CD4-positive, alpha-beta memory T cell (primary cell): ENCODE measurements at regions of chr1 and their contacts with region 1.

Region 1: GRCh38 chr1:145978854-145979759 is 14.6 kb downstream of the POLR3GL start:
- DNase-seq: peak; percentile 78 to 94 (median 81)
- H3K4me3 ChIP-seq: peak overlapping the region; percentile 52 to 62
- H3K4me3 Mint-ChIP-seq: no peak overlapping the region
- H3K27ac ChIP-seq: peak overlapping the region; percentile 70
- H3K27ac Mint-ChIP-seq: no peak overlapping the region
- H3K4me1 ChIP-seq: peaks cover 77% of the 10 kb centered on the region
- H3K4me1 Mint-ChIP-seq: peaks cover 13 to 31% (median 21%) of the 10 kb centered on the region in 4 donors
- H3K27me3 ChIP-seq: no peaks in the 10 kb centered on the region
- H3K27me3 Mint-ChIP-seq: no peaks in the 10 kb centered on the region

Region 2: DNA sequence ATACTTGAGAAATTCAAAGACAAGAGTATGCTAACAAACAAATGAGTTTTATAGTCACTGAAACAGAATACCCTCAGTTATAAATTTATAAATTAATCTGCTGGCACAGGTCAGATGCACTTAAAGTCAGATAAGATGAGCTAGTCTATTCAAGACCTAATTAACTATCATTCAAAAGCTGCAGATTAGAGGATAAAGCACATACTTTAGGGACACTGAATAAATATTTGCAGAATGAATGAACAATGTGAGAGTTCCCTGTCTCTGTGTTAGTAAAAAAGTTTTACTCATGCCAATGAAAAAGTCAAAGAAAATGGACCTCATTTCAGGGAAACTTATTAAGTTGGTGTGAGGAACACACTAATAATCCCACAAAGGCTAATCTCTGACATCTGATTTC is 213.5 kb before region 1 on chr1:
- CTCF ChIA-PET with region 1: no interaction called
- POLR2A ChIA-PET with region 1: no interaction called
- intact Hi-C with region 1: no loop called
- DNase-seq: no peak
- H3K4me3 ChIP-seq: no peak overlapping the region
- H3K4me3 Mint-ChIP-seq: no peak overlapping the region
- H3K27ac ChIP-seq: no peak overlapping the region
- H3K27ac Mint-ChIP-seq: no peak overlapping the region
- H3K4me1 ChIP-seq: no peaks in the 10 kb centered on the region
- H3K4me1 Mint-ChIP-seq: peaks cover 0 to 3% (median 0%) of the 10 kb centered on the region in 4 donors
- H3K27me3 ChIP-seq: no peaks in the 10 kb centered on the region
- H3K27me3 Mint-ChIP-seq: no peaks in the 10 kb centered on the region

Region 3: DNA sequence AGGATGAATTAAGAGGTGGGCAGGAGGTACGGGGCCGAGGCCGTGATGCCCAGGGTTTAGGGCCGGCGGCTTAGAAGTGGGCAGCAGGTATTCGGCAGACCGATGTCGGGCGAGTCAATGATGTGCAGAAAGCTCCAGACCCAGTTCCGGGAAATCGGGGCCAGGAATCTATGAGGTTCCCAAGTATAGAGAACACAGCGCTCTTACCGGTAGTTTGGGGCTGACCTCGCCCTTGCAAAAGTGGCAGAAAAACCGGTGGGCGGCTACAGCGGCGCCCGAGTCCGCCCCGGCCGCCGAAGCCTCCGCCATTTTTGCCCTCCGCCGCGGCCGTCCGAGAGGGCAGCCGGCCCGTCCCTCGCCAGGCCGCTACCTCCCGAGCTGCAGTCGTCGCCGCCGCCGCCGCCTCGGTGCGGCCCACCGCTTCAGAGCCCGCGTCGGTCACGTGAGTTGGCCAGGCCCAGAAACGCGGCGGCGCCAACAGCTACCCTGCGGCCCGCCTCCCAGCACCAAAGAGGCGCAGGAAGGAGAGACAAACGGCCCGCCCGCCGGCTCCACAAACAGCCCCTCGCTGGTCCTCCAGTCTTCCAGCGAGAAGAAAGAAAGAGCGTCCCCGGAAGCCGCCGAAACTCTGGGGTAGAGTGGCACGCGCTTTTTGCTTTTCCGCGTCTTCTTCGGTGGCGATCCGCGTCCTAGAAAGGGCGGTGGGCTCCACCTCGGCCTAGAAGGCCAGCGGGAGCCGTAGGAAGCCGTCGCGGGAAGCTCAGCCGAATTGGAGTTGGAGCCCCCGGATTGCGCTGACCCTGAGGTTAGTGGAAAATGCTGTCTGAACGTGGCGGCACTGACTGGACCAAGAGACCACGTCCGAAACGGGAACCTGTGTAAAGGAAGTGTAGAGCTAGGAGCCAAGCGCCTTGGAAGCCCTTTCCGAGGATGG is 155.3 kb before region 1 on chr1 and contains the starts of genes POLR3C and RNF115:
- CTCF ChIA-PET with region 1: no interaction called
- POLR2A ChIA-PET with region 1: interaction called, 14 read pairs
- intact Hi-C with region 1: no loop called
- DNase-seq: peak; percentile 84 to 92 (median 86)
- H3K4me3 ChIP-seq: peak within 1 kb of the TSS; percentile 93 to 100
- H3K4me3 Mint-ChIP-seq: peak within 1 kb of the TSS; percentile 97 to 99 (median 98)
- H3K27ac ChIP-seq: peak within 1 kb of the TSS; percentile 78
- H3K27ac Mint-ChIP-seq: peak within 1 kb of the TSS; percentile 90 to 99 (median 97)
- H3K4me1 ChIP-seq: peaks cover 23% of the 10 kb centered on the region
- H3K4me1 Mint-ChIP-seq: peaks cover 17 to 35% (median 24%) of the 10 kb centered on the region in 4 donors
- H3K27me3 ChIP-seq: no peaks in the 10 kb centered on the region
- H3K27me3 Mint-ChIP-seq: no peaks in the 10 kb centered on the region
- total RNA-seq, gene POLR3C: 43.5 to 44.8 TPM
- total RNA-seq, gene RNF115: 15.2 to 15.3 TPM

Region 4: DNA sequence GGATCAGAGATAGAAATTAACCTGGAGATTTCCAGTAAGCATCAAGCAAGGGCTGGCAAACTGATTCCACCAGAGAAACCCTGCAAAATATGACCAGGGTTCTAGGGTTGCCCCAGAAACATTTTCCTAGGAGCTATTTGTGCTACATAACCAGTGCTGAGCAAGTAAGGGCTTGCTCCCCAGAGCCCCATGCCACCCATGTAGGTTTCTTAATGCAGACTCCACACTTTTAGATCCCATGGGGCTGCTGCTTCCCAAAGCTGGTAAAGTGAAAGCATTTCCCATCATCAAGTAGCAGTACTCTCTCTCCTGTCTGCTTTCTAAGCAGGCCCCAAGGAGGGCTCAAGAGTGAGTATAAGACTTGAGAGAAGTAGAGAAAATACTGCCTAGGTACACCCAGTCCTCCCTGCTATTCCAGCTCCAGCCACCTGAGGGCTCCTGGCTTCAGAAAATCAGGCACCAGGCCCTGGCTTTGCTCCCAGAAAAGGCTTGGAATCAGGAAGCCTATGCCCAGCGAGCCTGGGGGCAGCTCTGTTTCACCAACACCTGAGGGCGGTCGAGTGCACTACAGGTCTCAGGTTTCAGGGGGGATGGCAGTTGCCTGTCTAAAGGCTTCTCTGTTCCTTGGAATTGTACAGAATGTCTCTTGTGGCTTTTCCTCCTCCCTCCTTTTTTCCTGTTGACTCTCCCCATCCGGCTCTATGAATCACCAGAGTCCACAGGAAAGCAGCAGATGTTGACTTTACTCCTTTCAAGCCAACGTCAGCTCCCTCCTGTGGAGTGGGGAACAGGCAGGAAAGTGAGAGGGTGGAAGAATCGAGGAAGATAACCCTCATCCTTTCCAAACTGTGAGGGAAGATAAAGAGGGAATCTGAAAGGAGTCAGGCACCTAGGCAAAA is 87.3 kb before region 1 on chr1:
- CTCF ChIA-PET with region 1: interaction called, 13 read pairs
- POLR2A ChIA-PET with region 1: interaction called, 4 read pairs
- intact Hi-C with region 1: no loop called
- DNase-seq: peak; percentile 21 to 50 (median 38)
- H3K4me3 ChIP-seq: no peak overlapping the region
- H3K4me3 Mint-ChIP-seq: no peak overlapping the region
- H3K27ac ChIP-seq: no peak overlapping the region
- H3K27ac Mint-ChIP-seq: no peak overlapping the region
- H3K4me1 ChIP-seq: no peaks in the 10 kb centered on the region
- H3K4me1 Mint-ChIP-seq: peaks cover 0 to 2% (median under 1%) of the 10 kb centered on the region in 4 donors
- H3K27me3 ChIP-seq: no peaks in the 10 kb centered on the region
- H3K27me3 Mint-ChIP-seq: peaks cover 0 to under 1% of the 10 kb centered on the region in 2 donors

Region 5: DNA sequence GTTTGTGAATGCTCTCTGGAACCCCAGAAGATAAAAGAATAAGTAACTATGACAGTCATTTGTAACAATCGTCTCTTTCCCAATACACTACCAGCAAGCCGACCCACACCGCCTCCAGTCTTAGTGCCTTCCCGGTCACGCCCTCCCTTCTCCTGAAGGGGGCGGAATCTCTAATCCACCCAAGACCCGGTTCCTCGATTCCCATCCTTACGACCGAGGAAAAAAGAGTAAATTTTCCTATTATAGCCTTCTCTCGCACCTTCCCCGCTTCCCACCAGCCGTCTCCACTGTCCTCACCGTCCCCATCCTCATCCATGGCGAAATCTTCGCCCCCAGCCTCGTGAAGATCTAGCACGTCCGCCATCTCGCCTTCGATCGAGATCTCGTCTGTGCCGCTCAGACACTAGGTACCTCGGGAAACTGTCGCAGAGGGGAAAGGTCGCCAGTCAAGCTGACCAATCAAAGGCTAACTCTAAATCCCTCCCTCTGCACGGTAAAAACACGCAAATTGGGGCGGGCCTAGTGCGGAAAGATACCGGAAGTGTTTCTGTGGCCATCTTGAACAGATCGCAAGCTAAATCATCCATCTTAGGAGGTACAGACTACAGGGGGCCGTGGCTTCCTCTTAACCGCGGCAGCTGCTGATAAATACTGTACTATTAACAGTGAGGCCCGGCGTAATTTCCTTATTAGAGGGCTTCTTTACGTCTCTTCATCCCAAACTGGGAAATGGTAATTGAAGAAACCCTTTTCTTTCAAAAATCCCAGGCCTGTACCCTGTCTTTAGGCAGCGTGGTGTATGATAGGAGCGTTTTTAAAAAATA is 51.8 kb before region 1 on chr1 and contains the start of gene RBM8A:
- CTCF ChIA-PET with region 1: interaction called, 29 read pairs
- POLR2A ChIA-PET with region 1: interaction called, 54 read pairs
- intact Hi-C with region 1: no loop called
- DNase-seq: peak; percentile 94 to 98 (median 97)
- H3K4me3 ChIP-seq: peak within 1 kb of the TSS; percentile 96 to 99
- H3K4me3 Mint-ChIP-seq: peak within 1 kb of the TSS in 5 of 8 donors; percentile 20 to 69 (median 42)
- H3K27ac ChIP-seq: peak within 1 kb of the TSS; percentile 96
- H3K27ac Mint-ChIP-seq: peak within 1 kb of the TSS in 4 of 7 donors; percentile 72 to 94 (median 82)
- H3K4me1 ChIP-seq: peaks cover 29% of the 10 kb centered on the region
- H3K4me1 Mint-ChIP-seq: peaks cover 10 to 25% (median 17%) of the 10 kb centered on the region in 4 donors
- H3K27me3 ChIP-seq: no peaks in the 10 kb centered on the region
- H3K27me3 Mint-ChIP-seq: no peaks in the 10 kb centered on the region
- total RNA-seq, gene RBM8A: 116 to 122 TPM

Region 6: DNA sequence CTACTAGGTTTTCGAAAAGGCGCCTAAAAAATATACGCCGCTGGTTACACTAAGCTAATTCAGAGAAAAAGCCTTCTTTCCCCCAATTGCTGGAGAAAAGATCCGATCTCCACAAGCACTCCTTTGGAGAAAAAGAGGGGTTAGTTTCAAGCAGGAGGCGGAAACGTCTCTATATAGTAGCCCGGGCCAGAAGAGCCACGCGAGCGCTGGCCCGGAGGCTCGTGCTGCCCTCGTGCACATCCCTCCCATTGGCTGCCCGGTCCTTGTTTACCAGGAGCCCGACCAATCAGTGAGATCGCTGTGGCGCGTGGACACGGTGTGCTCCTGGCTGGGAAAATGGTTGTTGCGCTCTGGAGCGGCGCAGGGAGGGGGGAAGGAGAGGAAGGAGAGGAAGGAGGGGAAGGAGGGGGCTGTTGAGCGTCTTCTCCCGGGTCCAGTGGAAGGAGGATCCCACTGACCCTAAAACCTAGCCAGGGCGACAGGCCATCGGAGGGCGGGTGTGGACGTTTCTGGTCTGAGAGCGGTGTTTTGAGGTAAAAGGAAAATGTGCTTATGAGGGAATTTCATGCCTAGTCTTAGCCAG is 17.4 kb after region 1 on chr1 and contains the start of gene TXNIP:
- CTCF ChIA-PET with region 1: interaction called, 447 read pairs
- POLR2A ChIA-PET with region 1: interaction called, 1,967 read pairs
- intact Hi-C with region 1: loop called (anchors 1 kb)
- DNase-seq: peak; percentile 90 to 96 (median 94)
- H3K4me3 ChIP-seq: peak within 1 kb of the TSS; percentile 97 to 99
- H3K4me3 Mint-ChIP-seq: peak within 1 kb of the TSS; percentile 96 to 99 (median 98)
- H3K27ac ChIP-seq: peak within 1 kb of the TSS; percentile 75
- H3K27ac Mint-ChIP-seq: peak within 1 kb of the TSS; percentile 96 to 99 (median 97)
- H3K4me1 ChIP-seq: peaks cover 62% of the 10 kb centered on the region
- H3K4me1 Mint-ChIP-seq: peaks cover 39 to 89% (median 50%) of the 10 kb centered on the region in 4 donors
- H3K27me3 ChIP-seq: no peaks in the 10 kb centered on the region
- H3K27me3 Mint-ChIP-seq: no peaks in the 10 kb centered on the region
- total RNA-seq, gene TXNIP: 933 to 985 TPM

Region 7: GRCh38 chr1:146019231-146020057 is 40.3 kb after region 1 on chr1:
- CTCF ChIA-PET with region 1: interaction called, 25 read pairs
- POLR2A ChIA-PET with region 1: interaction called, 1,967 read pairs
- intact Hi-C with region 1: no loop called
- DNase-seq: no peak
- H3K4me3 ChIP-seq: no peak overlapping the region
- H3K4me3 Mint-ChIP-seq: peak overlapping the region in 5 of 8 donors; percentile 22 to 72 (median 51)
- H3K27ac ChIP-seq: no peak overlapping the region
- H3K27ac Mint-ChIP-seq: no peak overlapping the region
- H3K4me1 ChIP-seq: peaks cover 12% of the 10 kb centered on the region
- H3K4me1 Mint-ChIP-seq: peaks cover 8 to 10% (median 9%) of the 10 kb centered on the region in 4 donors
- H3K27me3 ChIP-seq: peaks cover 34% of the 10 kb centered on the region
- H3K27me3 Mint-ChIP-seq: peaks cover 35 to 40% of the 10 kb centered on the region in 2 donors

Region 8: DNA sequence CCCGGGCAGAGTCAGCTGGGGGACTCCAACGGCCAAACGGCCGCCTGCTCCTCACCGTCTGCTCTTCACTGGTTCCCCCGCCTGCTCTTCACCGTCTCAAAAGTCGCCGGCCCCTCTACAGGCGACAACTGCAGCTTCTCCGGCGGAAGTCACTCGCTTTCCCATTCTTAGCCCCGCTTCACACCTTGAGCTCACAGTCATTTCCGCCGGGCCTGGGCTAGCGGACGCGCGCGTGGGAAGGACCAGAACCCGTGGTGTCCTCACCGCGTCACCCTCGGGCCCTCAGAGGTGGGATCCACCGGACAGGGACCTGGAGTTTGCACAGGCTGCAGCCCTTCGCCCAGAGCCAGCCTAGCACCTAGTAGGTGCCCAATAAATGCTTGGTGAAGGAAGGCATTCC is 70.3 kb after region 1 on chr1:
- CTCF ChIA-PET with region 1: no interaction called
- POLR2A ChIA-PET with region 1: no interaction called
- intact Hi-C with region 1: no loop called
- DNase-seq: peak in 1 of 5 donors; percentile 35
- H3K4me3 ChIP-seq: no peak overlapping the region
- H3K4me3 Mint-ChIP-seq: peak overlapping the region in 2 of 8 donors; percentile 0 to 38
- H3K27ac ChIP-seq: no peak overlapping the region
- H3K27ac Mint-ChIP-seq: peak overlapping the region in 3 of 7 donors; percentile 2 to 62 (median 40)
- H3K4me1 ChIP-seq: peaks cover 8% of the 10 kb centered on the region
- H3K4me1 Mint-ChIP-seq: peaks cover 7 to 41% (median 28%) of the 10 kb centered on the region in 4 donors
- H3K27me3 ChIP-seq: no peaks in the 10 kb centered on the region
- H3K27me3 Mint-ChIP-seq: no peaks in the 10 kb centered on the region